SK-N-SH (cell line): ENCODE measurements at regions of chr2 and their contacts with region 1.

Region 1: DNA sequence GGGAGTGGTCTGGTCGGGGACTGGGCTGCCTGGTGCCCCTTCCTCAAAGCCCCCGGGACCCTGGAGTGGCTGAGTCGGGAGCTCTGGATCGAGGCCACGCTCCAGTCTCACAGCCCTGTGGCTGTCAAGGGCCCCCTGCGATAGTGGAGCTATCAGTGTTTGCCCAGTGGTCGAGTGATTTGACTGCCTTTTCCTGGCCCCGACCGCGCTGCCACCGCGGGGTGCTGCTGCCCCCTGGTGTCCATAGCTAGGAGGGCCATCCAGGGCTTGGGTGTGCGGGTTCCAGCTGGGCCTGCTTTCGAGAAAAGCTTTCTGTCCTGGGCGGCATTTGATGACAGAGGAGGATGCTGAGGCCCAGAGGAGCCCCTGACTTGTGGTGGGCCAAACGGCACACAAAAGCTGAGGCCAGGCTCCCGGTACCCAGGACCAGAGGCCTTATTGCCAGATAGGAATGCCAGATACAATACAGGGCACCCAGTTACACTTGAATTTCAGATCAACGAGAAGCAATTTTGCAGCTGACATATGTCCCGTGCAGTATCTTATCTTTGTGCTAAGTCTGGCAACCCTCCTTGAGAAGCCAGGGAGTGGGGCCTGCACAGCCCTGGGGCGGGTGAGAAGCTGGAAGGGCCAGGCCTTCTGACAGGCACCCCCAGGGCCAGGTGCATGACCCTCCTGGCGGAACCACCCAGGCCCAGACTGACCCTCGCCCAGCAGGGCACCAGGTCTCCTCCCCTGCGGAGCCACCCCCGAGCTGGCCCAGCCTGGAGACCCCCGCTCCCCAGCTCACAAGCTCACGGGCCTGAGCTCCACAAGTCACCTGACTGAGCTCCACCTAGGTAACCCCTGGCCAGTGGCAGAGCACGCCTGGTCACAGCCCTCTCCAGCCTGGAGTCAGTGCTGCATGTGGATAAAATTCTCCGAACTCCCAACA is 13.0 kb downstream of the ODC1 start:
- DNase-seq: peak; percentile 99
- H3K4me3 ChIP-seq: no peak overlapping the region; a peak in 1 of 4 replicates
- H3K27ac ChIP-seq: no peak overlapping the region
- H3K4me1 ChIP-seq: peaks cover 0 to 4% of the 10 kb centered on the region in 2 experiments; a peak in 1 of 4 replicates
- H3K27me3 ChIP-seq: no peaks in the 10 kb centered on the region
- CTCF ChIP-seq: peak; percentile 98
- EP300 ChIP-seq: no peak
- RAD21 ChIP-seq: peak; percentile 100

Region 2: GRCh38 chr2:9984217-9984739 is 450.9 kb before region 1 on chr2:
- CTCF ChIA-PET with region 1: interaction called, 16 read pairs
- POLR2A ChIA-PET with region 1: no interaction called
- DNase-seq: peak; percentile 78
- H3K4me3 ChIP-seq: no peak overlapping the region
- H3K27ac ChIP-seq: no peak overlapping the region
- H3K4me1 ChIP-seq: peaks cover 22 to 25% of the 10 kb centered on the region in 2 experiments
- H3K27me3 ChIP-seq: no peaks in the 10 kb centered on the region
- CTCF ChIP-seq: peak; percentile 93
- EP300 ChIP-seq: no peak
- RAD21 ChIP-seq: peak; percentile 89

Region 3: GRCh38 chr2:10072656-10073480 is 362.3 kb before region 1 on chr2:
- CTCF ChIA-PET with region 1: interaction called, 373 read pairs
- POLR2A ChIA-PET with region 1: interaction called, 8 read pairs
- DNase-seq: peak; percentile 97
- H3K4me3 ChIP-seq: no peak overlapping the region; a peak in 1 of 4 replicates
- H3K27ac ChIP-seq: no peak overlapping the region
- H3K4me1 ChIP-seq: peaks cover 0 to 2% of the 10 kb centered on the region in 2 experiments; a peak in 1 of 4 replicates
- H3K27me3 ChIP-seq: peaks cover 17% of the 10 kb centered on the region; the same call in 1 of the 2 replicates
- CTCF ChIP-seq: peak; percentile 96
- EP300 ChIP-seq: no peak
- RAD21 ChIP-seq: peak; percentile 91

Region 4: DNA sequence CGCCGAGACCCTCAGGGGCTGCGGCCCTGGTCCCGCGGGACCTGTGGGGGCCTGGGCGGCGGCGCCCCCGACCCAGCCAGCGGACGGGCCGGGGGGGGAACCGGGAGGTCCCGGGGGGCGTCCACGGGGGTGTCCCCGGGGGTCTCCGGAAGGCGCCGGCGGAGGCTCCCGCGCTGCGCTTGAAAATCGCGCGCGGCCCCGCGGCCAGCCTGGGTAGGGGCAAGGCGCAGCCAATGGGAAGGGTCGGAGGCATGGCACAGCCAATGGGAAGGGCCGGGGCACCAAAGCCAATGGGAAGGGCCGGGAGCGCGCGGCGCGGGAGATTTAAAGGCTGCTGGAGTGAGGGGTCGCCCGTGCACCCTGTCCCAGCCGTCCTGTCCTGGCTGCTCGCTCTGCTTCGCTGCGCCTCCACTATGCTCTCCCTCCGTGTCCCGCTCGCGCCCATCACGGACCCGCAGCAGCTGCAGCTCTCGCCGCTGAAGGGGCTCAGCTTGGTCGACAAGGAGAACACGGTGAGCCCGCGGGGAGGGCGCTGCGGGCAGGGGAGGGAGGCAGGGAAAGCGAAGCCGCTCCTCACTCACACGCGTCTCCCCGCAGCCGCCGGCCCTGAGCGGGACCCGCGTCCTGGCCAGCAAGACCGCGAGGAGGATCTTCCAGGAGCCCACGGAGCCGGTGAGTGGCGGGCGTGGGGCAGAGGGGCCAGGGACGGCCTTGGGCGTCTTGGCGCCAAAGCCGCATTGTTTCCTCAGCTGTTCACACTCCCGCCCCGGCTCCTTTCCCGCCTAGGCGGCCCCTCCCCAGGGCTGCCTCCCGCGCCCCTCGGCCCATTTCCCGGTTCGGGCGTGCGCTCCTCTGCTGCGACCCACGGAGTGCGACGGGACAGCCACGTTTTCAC is 312.5 kb before region 1 on chr2 and contains the start of gene RRM2:
- CTCF ChIA-PET with region 1: interaction called, 413 read pairs
- POLR2A ChIA-PET with region 1: interaction called, 25 read pairs
- DNase-seq: peak; percentile 99
- H3K4me3 ChIP-seq: peak within 1 kb of the TSS; percentile 63 to 69
- H3K27ac ChIP-seq: peak within 1 kb of the TSS; percentile 84 to 87
- H3K4me1 ChIP-seq: peaks cover 12 to 30% of the 10 kb centered on the region in 2 experiments; a peak in 3 of 4 replicates
- H3K27me3 ChIP-seq: no peaks in the 10 kb centered on the region
- CTCF ChIP-seq: no peak
- EP300 ChIP-seq: no peak
- RAD21 ChIP-seq: no peak
- polyA plus RNA-seq, gene RRM2: 23.6 and 38.9 TPM in 2 replicates

Region 5: GRCh38 chr2:10285556-10286198 is 149.5 kb before region 1 on chr2:
- CTCF ChIA-PET with region 1: interaction called, 20 read pairs
- POLR2A ChIA-PET with region 1: no interaction called
- DNase-seq: peak; percentile 95
- H3K4me3 ChIP-seq: no peak overlapping the region
- H3K27ac ChIP-seq: peak overlapping the region; percentile 69 to 96
- H3K4me1 ChIP-seq: peaks cover 43 to 52% of the 10 kb centered on the region in 2 experiments
- H3K27me3 ChIP-seq: no peaks in the 10 kb centered on the region
- CTCF ChIP-seq: peak; percentile 17
- EP300 ChIP-seq: peak in 1 of 2 experiments; percentile 81; a peak in 1 of 4 replicates
- RAD21 ChIP-seq: no peak; the same call in none of the 2 replicates

Region 6: GRCh38 chr2:10414000-10414451 is 21.1 kb before region 1 on chr2:
- CTCF ChIA-PET with region 1: interaction called, 73 read pairs
- POLR2A ChIA-PET with region 1: no interaction called
- DNase-seq: no peak
- H3K4me3 ChIP-seq: no peak overlapping the region
- H3K27ac ChIP-seq: no peak overlapping the region
- H3K4me1 ChIP-seq: peaks cover 5 to 34% of the 10 kb centered on the region in 2 experiments; a peak in 3 of 4 replicates
- H3K27me3 ChIP-seq: no peaks in the 10 kb centered on the region
- CTCF ChIP-seq: no peak
- EP300 ChIP-seq: no peak
- RAD21 ChIP-seq: no peak

Region 7: GRCh38 chr2:10911261-10912075 is 476.3 kb after region 1 on chr2 and contains the start of gene KCNF1:
- CTCF ChIA-PET with region 1: no interaction called
- POLR2A ChIA-PET with region 1: no interaction called
- DNase-seq: peak; percentile 90
- H3K4me3 ChIP-seq: peak within 1 kb of the TSS; percentile 51 to 63
- H3K27ac ChIP-seq: no peak within 1 kb of the TSS
- H3K4me1 ChIP-seq: peaks cover 0 to 12% of the 10 kb centered on the region in 2 experiments; a peak in 1 of 4 replicates
- H3K27me3 ChIP-seq: peaks cover 14% of the 10 kb centered on the region; the same call in 1 of the 2 replicates
- CTCF ChIP-seq: peak; percentile 56
- EP300 ChIP-seq: no peak
- RAD21 ChIP-seq: peak; percentile 41
- polyA plus RNA-seq, gene KCNF1: 0.16 and 0.23 TPM in 2 replicates